Activated CD4-positive, alpha-beta T cell treated with anti-CD3 and anti-CD28 coated beads for 36 hours (primary cell): ENCODE measurements at regions of chr6 and their contacts with region 1.

Region 1: GRCh38 chr6:119349323-119350042 is at the start of gene MAN1A1:
- DNase-seq: peak; percentile 93
- ATAC-seq: peak; percentile 87
- H3K4me3 Mint-ChIP-seq: peak within 1 kb of the TSS; percentile 84
- H3K27ac Mint-ChIP-seq: peak within 1 kb of the TSS; percentile 95
- H3K4me1 Mint-ChIP-seq: peaks cover 39% of the 10 kb centered on the region
- H3K27me3 Mint-ChIP-seq: no peaks in the 10 kb centered on the region
- total RNA-seq, gene MAN1A1: 15.3 to 18.4 TPM

Region 2: DNA sequence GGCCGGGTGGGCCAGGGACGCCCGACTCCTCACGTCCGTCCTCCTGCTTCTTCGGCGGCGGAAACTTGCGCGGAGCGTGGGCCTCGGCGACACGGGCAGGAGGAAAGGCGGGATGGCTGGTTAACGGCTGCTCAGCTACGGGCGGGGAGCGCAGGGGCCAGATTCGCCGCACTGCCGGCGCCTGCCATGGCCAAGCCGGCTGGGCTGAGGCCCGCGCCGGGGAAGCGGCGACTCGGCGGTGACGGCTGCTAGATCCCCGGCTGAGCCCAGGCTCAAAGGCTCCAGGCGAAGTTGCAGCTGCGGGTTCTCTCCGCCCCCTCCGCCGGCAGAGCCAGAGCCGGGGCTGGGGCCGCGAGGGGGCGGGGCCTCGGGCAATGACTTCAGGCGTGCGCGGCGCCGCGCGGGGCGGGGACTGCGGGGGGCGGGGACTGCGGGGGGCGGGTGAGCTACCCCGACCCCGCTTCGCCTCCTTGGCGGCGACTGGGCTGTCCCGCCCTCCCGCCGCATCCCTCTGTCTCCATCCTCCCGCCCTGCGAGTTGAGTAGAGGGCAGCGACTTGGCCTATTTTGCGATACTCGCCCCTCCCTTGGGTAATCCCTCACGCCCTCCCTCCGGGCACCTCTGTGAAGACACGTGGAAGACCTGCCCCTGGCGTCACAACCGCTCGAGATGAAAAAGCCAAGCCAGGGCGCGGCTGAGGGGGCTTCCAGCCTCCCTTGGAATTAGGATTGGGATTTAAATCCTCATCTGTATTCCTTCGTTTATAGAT is 698.0 kb before region 1 on chr6 and contains the start of gene CEP85L:
- CTCF ChIA-PET with region 1: no interaction called
- POLR2A ChIA-PET with region 1: no interaction called
- intact Hi-C with region 1: loop called (anchors 5 to 10 kb)
- DNase-seq: peak; percentile 96
- ATAC-seq: peak; percentile 93
- H3K4me3 Mint-ChIP-seq: peak within 1 kb of the TSS; percentile 85
- H3K27ac Mint-ChIP-seq: peak within 1 kb of the TSS; percentile 94
- H3K4me1 Mint-ChIP-seq: peaks cover 50% of the 10 kb centered on the region
- H3K27me3 Mint-ChIP-seq: no peaks in the 10 kb centered on the region
- total RNA-seq, gene CEP85L: 29.5 to 29.7 TPM

Region 3: DNA sequence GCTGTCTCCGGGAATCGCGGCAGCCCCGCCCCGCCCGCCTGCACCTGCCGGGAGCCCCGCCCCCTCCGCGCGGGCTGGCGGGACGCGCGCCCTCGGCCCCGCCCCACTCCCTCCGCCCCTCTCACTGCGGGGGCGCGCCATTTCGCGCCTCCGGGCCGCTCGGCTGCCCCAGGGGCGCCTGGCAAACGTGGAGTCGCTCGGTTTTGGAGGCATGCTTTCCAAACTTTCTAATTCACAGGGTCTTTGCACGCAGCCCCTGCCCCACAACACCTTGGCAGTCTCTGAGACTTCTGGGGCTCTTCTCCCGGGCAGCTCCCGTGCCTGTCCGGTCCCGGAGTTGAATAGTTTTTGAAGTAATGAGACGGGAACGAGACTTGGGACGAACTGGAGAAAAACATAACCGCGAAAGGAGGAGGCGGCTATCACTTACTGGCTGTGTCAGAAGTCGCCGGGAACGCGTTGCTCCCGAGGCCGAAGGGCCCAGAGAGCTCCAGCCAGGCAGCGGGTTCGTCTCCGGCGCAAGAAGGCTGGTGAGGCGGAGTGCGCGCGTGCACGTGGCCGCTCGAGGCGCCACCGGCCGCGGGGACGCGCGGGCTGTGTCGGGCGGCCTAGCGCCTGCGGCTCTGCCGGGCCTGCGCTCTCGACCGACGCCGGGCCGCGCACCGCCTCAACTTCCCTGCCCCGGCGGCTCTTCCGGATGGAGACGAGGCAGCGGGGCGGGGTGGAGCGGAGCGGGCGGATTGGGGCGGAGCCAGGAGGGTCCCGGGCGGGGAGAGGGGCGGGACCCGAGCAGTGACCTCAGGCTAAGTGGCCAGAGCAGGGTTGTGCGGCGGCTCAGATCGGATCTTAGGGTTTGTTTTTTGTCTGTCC is 414.8 kb before region 1 on chr6 and contains the start of gene MCM9:
- CTCF ChIA-PET with region 1: no interaction called
- POLR2A ChIA-PET with region 1: no interaction called
- intact Hi-C with region 1: loop called (anchors 1 to 2 kb)
- DNase-seq: peak; percentile 94
- ATAC-seq: peak; percentile 97
- H3K4me3 Mint-ChIP-seq: peak within 1 kb of the TSS; percentile 87
- H3K27ac Mint-ChIP-seq: peak within 1 kb of the TSS; percentile 94
- H3K4me1 Mint-ChIP-seq: peaks cover 35% of the 10 kb centered on the region
- H3K27me3 Mint-ChIP-seq: no peaks in the 10 kb centered on the region
- total RNA-seq, gene MCM9: 17.0 to 17.2 TPM

Region 4: GRCh38 chr6:119129148-119129967 is 220.1 kb before region 1 on chr6:
- CTCF ChIA-PET with region 1: interaction called, 3 read pairs
- POLR2A ChIA-PET with region 1: no interaction called
- intact Hi-C with region 1: loop called in 1 of 2 experiments (anchors 5 kb)
- DNase-seq: no peak
- ATAC-seq: peak; percentile 86
- H3K4me3 Mint-ChIP-seq: no peak overlapping the region
- H3K27ac Mint-ChIP-seq: no peak overlapping the region
- H3K4me1 Mint-ChIP-seq: peaks cover 6% of the 10 kb centered on the region
- H3K27me3 Mint-ChIP-seq: no peaks in the 10 kb centered on the region

Region 5: DNA sequence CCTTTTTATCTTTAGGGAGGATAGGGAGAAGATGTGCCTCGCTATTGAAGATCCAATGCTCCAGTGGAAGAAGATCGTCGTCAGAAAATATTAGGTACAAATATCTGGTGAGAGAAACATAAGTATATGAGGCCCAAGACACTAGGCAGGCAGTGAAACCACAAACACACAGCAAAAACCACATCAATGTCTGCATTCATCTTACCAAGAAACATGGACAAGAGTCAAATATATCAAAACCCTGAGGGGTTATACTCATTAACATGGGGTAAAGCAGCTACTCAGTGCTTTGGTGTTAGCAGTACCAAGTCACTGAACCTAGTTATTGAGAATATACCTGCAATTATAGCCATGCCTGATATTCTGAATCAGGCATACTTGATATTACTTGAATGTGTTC is 169.6 kb before region 1 on chr6:
- CTCF ChIA-PET with region 1: no interaction called
- POLR2A ChIA-PET with region 1: no interaction called
- intact Hi-C with region 1: no loop called
- DNase-seq: no peak
- ATAC-seq: peak; percentile 42
- H3K4me3 Mint-ChIP-seq: no peak overlapping the region
- H3K27ac Mint-ChIP-seq: no peak overlapping the region
- H3K4me1 Mint-ChIP-seq: peaks cover 8% of the 10 kb centered on the region
- H3K27me3 Mint-ChIP-seq: no peaks in the 10 kb centered on the region

Region 6: GRCh38 chr6:119533603-119534279 is 184.3 kb after region 1 on chr6:
- CTCF ChIA-PET with region 1: interaction called, 4 read pairs
- POLR2A ChIA-PET with region 1: no interaction called
- intact Hi-C with region 1: loop called (anchors 1 to 2 kb)
- DNase-seq: peak; percentile 6
- ATAC-seq: peak; percentile 95
- H3K4me3 Mint-ChIP-seq: no peak overlapping the region
- H3K27ac Mint-ChIP-seq: no peak overlapping the region
- H3K4me1 Mint-ChIP-seq: peaks cover 12% of the 10 kb centered on the region
- H3K27me3 Mint-ChIP-seq: peaks cover 8% of the 10 kb centered on the region